Sciatic nerve (tissue), 2 donors: ENCODE measurements at regions of chr10 and their contacts with region 1.

Region 1: DNA sequence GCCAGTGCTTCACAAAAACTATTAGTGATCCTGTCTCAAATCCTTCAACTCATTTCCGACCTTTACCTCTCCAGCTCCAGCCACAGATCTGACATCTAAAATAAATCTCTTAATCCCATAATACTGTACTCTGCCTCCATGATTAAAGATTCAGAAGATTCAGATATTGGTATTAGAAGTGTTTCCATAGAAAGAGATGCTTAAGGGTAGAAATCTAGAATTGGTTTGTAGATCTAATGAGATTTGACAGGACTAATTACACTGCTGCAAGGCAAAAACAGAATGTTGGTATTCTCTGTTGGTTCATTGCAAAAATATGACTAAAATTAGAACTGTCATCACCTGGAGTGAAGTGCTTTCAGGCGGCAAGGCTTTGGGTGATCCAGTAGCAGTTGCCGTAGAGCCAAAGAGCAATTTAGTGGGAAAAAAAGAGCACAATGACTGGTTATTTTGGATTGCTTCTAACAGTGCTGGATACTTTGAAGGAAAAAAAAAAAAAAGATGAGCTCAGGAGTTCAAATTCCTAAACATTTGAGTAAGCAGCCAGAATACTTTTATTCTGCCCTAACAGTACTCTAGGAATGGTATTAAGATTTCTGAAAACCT is 940.1 kb upstream of the SORCS1 start:
- DNase-seq: no peak
- ATAC-seq: no peak

Region 2: GRCh38 chr10:108966005-108966404 is 861.4 kb after region 1 on chr10:
- intact Hi-C with region 1: loop called (anchors 5 kb)
- DNase-seq: no peak
- ATAC-seq: no peak

Region 3: DNA sequence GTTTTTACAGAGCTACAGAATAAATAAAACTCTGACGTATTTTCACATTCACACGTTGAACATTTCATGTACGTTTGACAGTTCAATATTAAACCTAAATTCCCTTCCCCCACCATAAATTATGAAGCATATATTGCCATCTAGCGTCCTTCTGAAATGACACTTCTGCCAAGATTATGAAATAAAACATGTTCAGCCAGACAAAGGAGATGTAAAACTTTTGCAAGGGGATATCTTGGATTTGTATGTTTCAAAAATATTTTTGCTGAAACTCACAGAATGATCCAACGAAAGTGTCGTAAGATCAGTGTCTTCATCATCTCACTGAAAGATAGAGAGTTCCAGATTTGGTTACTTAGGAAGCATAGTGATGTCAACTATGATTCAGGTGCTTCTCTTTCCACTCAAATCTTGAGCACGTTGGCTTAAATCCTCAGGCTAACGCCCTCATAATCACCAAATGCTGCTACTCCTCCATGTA is 914.3 kb after region 1 on chr10:
- intact Hi-C with region 1: no loop called
- DNase-seq: no peak
- ATAC-seq: peak; percentile 24